PC-3 (cell line): ENCODE measurements at regions of chrX and their contacts with region 1.

Region 1: GRCh38 chrX:74015379-74016019 is 288.5 kb upstream of the ZCCHC13 start:
- DNase-seq: peak; percentile 80
- ATAC-seq: peak; percentile 85
- H3K4me3 ChIP-seq: no peak overlapping the region
- H3K27ac ChIP-seq: no peak overlapping the region
- H3K4me1 ChIP-seq: 0 out of 2 replicates have a peak, but pooled peaks cover 3% of the 10 kb centered on the region
- H3K27me3 ChIP-seq: no peaks in the 10 kb centered on the region
- CTCF ChIP-seq: peak; percentile 90

Region 2: DNA sequence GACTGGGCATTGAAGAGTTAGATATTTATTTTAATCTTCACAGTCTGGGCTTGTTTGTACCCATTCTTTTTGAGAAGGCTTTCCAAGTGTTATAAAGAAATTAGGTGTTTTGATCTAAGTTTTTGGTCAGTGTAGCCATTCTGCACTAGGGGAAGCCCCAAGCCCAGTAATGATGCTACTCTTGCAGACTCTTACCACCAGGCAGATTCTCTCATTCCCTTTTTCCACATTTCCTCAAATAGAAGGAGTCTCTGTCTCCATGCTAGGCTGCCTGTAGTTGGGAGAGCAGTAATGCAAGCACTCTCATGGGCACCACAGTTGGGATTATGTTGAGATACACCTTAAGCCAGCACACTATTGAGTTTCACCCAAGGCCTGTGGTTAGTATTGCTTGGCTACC is 547.1 kb before region 1 on chrX:
- CTCF ChIA-PET with region 1: no interaction called
- POLR2A ChIA-PET with region 1: no interaction called
- intact Hi-C with region 1: loop called (anchors 5 kb)
- DNase-seq: no peak
- ATAC-seq: no peak
- H3K4me3 ChIP-seq: no peak overlapping the region
- H3K27ac ChIP-seq: no peak overlapping the region
- H3K4me1 ChIP-seq: no peaks in the 10 kb centered on the region
- H3K27me3 ChIP-seq: no peaks in the 10 kb centered on the region
- CTCF ChIP-seq: no peak

Region 3: DNA sequence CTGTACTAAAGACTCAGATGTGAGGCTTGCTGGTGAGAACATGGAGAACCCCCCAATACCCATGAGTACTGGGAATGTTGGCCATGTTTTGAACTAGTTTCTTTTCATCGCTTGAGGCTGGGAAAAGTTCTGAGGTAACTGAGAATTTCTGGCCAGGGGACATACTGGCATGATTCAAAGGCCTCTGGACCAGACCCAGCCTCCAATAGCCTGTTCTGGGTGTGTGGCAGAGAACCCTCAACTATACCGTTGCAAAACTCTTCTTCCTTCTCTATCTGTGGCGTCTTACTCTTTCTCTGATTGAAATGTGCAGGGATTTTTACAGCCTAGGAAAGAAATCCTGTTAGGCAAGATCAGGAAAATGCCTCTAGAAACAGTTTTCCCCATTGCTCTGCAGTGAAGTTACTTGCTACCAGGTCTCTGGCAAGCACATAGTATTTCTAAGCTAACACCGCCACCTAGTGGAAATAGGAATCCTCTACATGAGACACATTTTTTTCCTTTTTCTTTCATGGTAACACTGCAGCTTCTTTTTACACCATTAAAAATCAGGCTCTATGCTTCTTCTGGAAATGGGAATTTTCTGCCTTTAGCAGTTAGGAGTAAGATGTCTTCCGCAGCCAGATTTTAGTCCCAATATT is 117.8 kb after region 1 on chrX:
- CTCF ChIA-PET with region 1: no interaction called
- POLR2A ChIA-PET with region 1: no interaction called
- intact Hi-C with region 1: loop called (anchors 1 kb)
- DNase-seq: peak; percentile 76
- ATAC-seq: peak; percentile 76
- H3K4me3 ChIP-seq: no peak overlapping the region
- H3K27ac ChIP-seq: no peak overlapping the region
- H3K4me1 ChIP-seq: no peaks in the 10 kb centered on the region
- H3K27me3 ChIP-seq: no peaks in the 10 kb centered on the region
- CTCF ChIP-seq: peak; percentile 73

Region 4: GRCh38 chrX:74179071-74179470 is 163.6 kb after region 1 on chrX:
- CTCF ChIA-PET with region 1: no interaction called
- POLR2A ChIA-PET with region 1: no interaction called
- intact Hi-C with region 1: no loop called
- DNase-seq: peak; percentile 62
- ATAC-seq: peak; percentile 68
- H3K4me3 ChIP-seq: no peak overlapping the region
- H3K27ac ChIP-seq: no peak overlapping the region
- H3K4me1 ChIP-seq: peaks cover 11% of the 10 kb centered on the region
- H3K27me3 ChIP-seq: no peaks in the 10 kb centered on the region
- CTCF ChIP-seq: no peak